Heart right ventricle (tissue), 16 donors: ENCODE measurements at regions of chr10 and their contacts with region 1.

Region 1: DNA sequence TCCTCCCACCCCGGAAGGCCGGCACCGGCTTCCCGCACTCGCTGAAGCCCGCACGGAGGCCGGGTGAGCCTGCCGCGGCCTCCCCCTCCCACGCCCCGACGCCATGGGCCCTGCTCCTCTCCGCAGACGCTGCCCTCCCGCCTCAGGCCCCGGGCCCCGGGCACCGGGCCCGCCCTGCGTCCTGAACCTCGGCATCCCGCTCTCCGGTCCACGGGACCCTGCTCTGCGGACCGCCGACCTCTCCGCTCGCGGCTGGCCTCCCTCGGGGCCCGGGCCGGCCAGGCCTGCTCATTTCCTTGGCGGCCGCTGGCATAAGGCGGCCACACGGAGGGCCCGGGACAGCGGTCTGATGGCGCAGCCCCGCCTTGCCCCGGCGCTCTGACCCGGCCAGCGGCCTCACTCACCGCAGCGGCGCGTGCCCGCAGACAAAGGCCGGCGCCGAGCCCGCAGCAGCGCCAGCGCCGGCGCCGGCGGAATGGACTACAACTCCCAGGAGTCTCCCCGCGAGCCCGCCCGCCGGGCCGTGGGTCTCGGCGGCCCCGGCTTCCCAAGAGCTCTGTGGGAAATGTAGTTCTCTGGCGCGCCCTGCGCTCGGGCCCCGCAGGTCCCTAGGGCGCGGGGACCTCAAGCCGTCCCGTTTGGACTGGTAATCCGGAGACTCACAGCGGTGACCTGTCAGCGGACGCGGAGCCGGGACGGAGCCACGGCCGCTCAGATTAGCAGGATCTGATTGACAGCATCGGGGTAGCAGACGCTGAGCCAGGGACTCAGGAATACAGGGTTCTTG is at the start of gene ZNF32:
- DNase-seq: peak; percentile 87 to 89
- ATAC-seq: peak; percentile 96 to 99 (median 98)
- H3K4me3 ChIP-seq: peak within 1 kb of the TSS; percentile 53 to 98 (median 90)
- H3K27ac ChIP-seq: peak within 1 kb of the TSS; percentile 72 to 96 (median 90)
- H3K4me1 ChIP-seq: peaks cover 0 to 18% (median 9%) of the 10 kb centered on the region in 9 donors
- H3K27me3 ChIP-seq: peaks cover 0 to 3% (median 0%) of the 10 kb centered on the region in 7 donors
- CTCF ChIP-seq: peak in 1 of 9 donors; percentile 14
- total RNA-seq, gene ZNF32: 34.4 to 52.3 (median 41.6) TPM

Region 2: DNA sequence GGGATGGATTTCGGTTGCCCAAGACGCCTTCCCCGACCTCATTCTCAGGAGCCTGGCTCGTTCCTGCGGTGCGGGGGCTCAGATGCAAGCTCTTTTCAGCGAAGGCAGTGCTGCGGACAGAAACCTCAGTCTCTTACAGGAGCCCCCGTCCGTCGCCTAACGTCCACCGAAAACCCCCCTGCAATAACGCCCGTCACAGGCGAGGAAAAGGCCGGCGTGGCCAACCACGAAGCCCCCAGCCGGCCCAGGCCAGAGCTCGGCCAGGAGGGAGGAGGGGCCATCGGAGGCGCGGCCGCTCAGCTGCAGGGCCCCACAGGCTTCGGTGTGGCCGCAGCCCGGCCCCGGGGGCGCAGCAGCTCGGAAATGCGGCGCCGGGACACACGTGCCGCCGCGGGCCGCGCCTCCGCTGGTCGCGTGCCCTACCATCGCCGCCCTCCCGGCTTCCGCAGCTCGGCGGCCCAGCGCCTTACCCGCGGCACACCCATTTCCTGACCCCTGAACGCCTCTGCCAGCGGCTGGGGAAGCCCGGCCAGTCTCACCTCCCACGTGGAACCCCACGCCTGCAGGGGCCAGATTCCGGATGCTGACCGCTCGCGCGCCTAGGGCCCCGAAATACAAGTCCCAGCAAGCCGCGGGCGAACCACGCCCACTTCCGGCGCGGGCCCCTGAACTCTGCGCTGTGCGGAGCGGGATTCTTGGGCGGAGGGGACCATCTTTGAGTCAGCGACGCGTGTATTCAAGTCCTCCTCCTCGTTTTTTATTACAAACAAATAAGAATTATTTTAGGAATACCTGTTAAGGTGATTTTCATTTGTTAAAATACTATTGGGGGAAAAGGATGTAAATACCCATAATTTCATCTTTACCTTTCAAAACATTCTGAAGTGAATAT is 74.3 kb before region 1 on chr10 and contains the start of gene ZNF239:
- intact Hi-C with region 1: loop called in 1 of 10 experiments (anchors 2 kb)
- DNase-seq: peak; percentile 91 to 92
- ATAC-seq: peak; percentile 95 to 99 (median 98)
- H3K4me3 ChIP-seq: peak within 1 kb of the TSS; percentile 7 to 74 (median 63)
- H3K27ac ChIP-seq: peak within 1 kb of the TSS in 9 of 10 donors; percentile 52 to 83 (median 60)
- H3K4me1 ChIP-seq: peaks cover 0 to 20% (median 14%) of the 10 kb centered on the region in 9 donors
- H3K27me3 ChIP-seq: no peaks in the 10 kb centered on the region
- CTCF ChIP-seq: peak in 1 of 9 donors; percentile 15
- total RNA-seq, gene ZNF239: 1.1 to 2.5 (median 1.6) TPM